PC-9 (cell line): ENCODE measurements at regions of chr12 and their contacts with region 1.

Region 1: GRCh38 chr12:56377310-56377988 is 14.8 kb upstream of the APOF start:
- DNase-seq: no peak
- H3K4me3 ChIP-seq: no peak overlapping the region
- H3K27ac ChIP-seq: no peak overlapping the region
- H3K4me1 ChIP-seq: no peaks in the 10 kb centered on the region
- H3K27me3 ChIP-seq: no peaks in the 10 kb centered on the region
- CTCF ChIP-seq: no peak

Region 2: GRCh38 chr12:56308714-56309113 is 68.7 kb before region 1 on chr12:
- CTCF ChIA-PET with region 1: no interaction called
- POLR2A ChIA-PET with region 1: interaction called, 20 read pairs
- intact Hi-C with region 1: no loop called
- DNase-seq: no peak
- H3K4me3 ChIP-seq: no peak overlapping the region
- H3K27ac ChIP-seq: no peak overlapping the region
- H3K4me1 ChIP-seq: no peaks in the 10 kb centered on the region
- H3K27me3 ChIP-seq: no peaks in the 10 kb centered on the region
- CTCF ChIP-seq: no peak

Region 3: GRCh38 chr12:56461235-56462159 is 84.0 kb after region 1 on chr12:
- CTCF ChIA-PET with region 1: no interaction called
- POLR2A ChIA-PET with region 1: interaction called, 16 read pairs
- intact Hi-C with region 1: no loop called
- DNase-seq: peak; percentile 11 to 44
- H3K4me3 ChIP-seq: no peak overlapping the region
- H3K27ac ChIP-seq: peak overlapping the region; percentile 25; the same call in 1 of the 2 replicates
- H3K4me1 ChIP-seq: 0 out of 2 replicates have a peak, but pooled peaks cover 4% of the 10 kb centered on the region
- H3K27me3 ChIP-seq: no peaks in the 10 kb centered on the region
- CTCF ChIP-seq: no peak